ENCODE measurements at regions of chr19 and their contacts with region 1.

Region 1: GRCh38 chr19:38229585-38230073 is 5.6 kb upstream of the DPF1 start:
- DNase-seq: no peak
- H3K4me3 ChIP-seq: peak overlapping the region in 1 of 2 donors; percentile 16
- H3K27ac ChIP-seq: no peak overlapping the region
- H3K4me1 ChIP-seq: peaks cover 0 to 22% (median 18%) of the 10 kb centered on the region in 4 donors
- H3K27me3 ChIP-seq: peaks cover 6 to 62% of the 10 kb centered on the region in 2 donors
- CTCF ChIP-seq: no peak

Region 2: GRCh38 chr19:38290631-38291157 is 61.1 kb after region 1 on chr19:
- intact Hi-C with region 1: no loop called
- DNase-seq: no peak
- H3K4me3 ChIP-seq: no peak overlapping the region
- H3K27ac ChIP-seq: no peak overlapping the region
- H3K4me1 ChIP-seq: peaks cover 0 to 18% (median 0%) of the 10 kb centered on the region in 4 donors
- H3K27me3 ChIP-seq: no peaks in the 10 kb centered on the region
- CTCF ChIP-seq: no peak

Region 3: GRCh38 chr19:38374429-38375176 is 145.0 kb after region 1 on chr19 and contains the start of gene PSMD8:
- intact Hi-C with region 1: loop called (anchors 2 kb)
- DNase-seq: peak; percentile 99 to 100
- H3K4me3 ChIP-seq: peak within 1 kb of the TSS; percentile 66 to 95
- H3K27ac ChIP-seq: peak within 1 kb of the TSS; percentile 82 to 91
- H3K4me1 ChIP-seq: peaks cover 0 to 25% (median 20%) of the 10 kb centered on the region in 4 donors
- H3K27me3 ChIP-seq: no peaks in the 10 kb centered on the region
- CTCF ChIP-seq: peak in 1 of 2 experiments; percentile 11